Aorta (tissue), 5 donors: ENCODE measurements at regions of chr3 and their contacts with region 1.

Region 1: DNA sequence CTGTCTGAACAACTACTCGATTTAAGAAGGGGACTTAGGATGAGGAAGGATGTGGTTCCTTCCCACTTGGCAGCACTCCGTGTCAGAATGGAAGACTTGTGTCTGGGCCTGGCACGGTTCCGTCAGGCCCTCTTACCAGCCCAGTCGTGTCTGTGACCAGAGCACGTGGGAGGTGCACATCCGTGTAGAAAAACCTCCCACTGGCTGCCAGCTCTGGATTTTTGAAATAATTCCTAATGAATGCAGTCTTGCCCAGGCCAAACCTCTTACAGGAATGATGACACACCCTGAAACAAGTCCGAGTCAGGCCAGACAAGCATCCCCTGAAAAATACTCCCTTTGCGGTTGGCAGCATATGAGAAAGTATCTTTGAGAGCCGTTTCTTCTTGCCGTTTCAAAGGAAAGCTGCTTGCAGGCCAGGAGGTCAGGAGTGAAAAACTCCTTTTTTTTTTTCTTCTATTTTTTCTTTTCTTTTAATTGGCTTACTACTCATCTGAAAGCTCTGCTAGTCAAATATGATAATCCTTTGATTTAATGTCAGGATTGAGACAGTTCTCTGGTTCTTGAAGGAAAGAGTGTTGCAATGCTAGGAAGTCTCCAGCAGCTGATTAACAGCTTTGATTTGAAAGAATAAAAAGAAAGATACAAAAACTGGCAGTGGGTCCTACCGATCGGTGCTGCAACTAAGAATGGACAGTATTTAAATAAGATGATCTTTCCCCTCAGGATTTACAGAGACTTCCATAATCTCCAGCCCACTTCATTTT is 19.8 kb downstream of the IL1RAP start:
- DNase-seq: peak; percentile 88 to 90
- ATAC-seq: peak; percentile 80
- H3K4me3 ChIP-seq: peak overlapping the region in 1 of 2 donors; percentile 16
- H3K27ac ChIP-seq: no peak overlapping the region
- H3K4me1 ChIP-seq: peaks cover 0 to 2% of the 10 kb centered on the region in 2 donors
- H3K27me3 ChIP-seq: peaks cover 0 to 3% of the 10 kb centered on the region in 2 donors

Region 2: DNA sequence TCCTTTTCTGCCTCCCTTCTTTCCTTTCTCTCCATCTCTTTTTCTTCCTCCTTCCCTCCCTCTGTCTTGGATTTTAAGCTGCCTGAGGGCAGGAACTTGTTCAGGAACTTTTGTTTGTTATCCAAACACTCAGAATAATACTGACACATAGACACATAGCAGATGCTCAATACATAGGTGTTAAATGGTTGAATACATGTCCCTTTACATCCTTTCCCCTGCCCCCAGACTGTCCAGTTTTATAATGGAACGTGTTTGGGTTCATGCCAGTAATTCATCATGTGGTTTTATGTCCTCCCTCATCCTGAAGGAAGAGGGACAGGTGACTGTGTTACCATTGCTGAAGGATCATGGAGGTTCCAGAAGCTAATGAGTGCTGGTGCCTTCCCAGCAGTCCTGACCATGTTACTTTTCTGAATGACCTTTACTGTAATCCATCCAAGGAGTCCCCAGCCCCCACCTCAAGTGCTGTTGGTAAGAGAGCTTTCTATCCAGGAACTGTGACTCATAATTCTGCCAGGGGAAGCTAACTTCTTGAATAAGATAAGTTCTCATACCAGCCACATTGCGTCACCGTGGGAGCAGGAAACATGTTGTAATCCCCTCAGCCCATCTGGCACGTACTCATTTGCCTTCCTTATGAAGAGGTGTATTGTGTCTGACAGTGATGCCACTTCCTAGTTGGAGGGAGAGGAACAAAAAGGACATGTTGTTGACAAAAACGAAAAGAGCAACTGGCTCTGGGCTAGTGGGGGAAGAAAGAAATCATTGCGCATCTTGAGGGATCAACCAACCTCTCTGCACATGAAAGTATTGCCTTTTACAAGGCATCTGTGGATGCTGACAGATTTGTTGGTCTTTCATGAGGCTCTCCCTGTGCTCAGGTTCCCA is 32.6 kb after region 1 on chr3:
- intact Hi-C with region 1: loop called in 1 of 2 experiments (anchors 1 kb)
- DNase-seq: peak; percentile 89 to 95
- ATAC-seq: peak; percentile 85
- H3K4me3 ChIP-seq: no peak overlapping the region
- H3K27ac ChIP-seq: no peak overlapping the region
- H3K4me1 ChIP-seq: peaks cover 0 to 2% of the 10 kb centered on the region in 2 donors
- H3K27me3 ChIP-seq: no peaks in the 10 kb centered on the region